Kidney (tissue), 22 donors: ENCODE measurements at regions of chr11 and their contacts with region 1.

Region 1: DNA sequence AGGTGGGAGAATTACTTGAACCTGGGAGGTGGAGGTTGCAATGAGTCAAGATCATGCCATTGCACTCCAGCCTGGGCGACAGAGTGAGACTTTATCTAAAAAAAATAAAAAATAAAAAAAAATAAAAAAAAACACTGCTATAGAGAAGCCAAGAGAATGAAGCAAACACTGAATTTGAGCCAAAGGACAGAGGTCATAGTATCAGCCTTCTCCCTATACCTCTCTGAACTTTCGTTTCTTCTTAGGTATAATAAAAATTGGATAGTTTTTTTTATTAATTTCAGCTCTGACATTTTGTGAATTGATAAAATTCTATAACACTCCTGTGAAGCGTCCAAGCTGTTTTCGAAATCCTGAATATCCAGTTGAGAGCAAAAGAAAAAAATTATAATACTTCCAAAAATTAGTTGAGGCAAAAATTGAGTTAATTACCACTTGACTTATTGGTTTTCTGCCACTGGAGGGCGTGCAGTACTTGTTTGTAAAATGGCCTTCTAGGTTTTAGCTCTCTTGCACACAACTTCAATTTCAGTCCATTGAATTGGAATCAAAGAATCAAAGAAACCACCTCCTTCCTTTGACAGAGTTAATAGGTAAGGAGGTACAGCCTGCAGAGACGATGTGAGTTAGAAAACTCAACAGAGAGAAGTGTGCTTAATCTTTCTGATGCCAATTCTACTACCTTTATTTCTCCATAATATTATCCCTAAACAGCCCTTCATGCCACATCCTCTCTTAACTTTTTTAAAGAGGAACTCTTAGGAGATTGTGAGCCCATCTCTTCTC is 143.2 kb downstream of the BBOX1 start:
- DNase-seq: peak in 3 of 5 donors; percentile 59 to 86 (median 70)
- H3K4me3 ChIP-seq: no peak overlapping the region
- H3K27ac ChIP-seq: no peak overlapping the region
- H3K4me1 ChIP-seq: peaks cover 3 to 15% (median 13%) of the 10 kb centered on the region in 3 donors
- H3K27me3 ChIP-seq: no peaks in the 10 kb centered on the region
- CTCF ChIP-seq: peak; percentile 86

Region 2: DNA sequence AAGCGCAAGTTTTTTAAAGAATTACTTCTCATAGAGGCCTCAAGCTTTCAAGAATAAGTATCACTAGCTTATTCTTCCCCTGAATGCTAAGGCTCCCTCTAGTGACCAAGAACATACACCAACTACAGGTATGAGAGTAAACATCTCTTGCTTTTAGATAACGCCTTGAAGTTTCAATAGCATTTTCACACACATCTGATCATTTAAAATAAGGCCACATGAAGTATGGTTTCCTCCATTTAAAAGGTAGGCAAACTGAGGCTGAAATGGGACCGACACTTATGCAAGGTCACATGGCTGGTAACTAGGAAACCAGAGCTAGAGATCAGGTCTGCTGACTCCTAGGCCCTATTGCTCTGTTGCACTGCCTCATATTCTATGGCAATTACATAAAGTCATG is 112.6 kb after region 1 on chr11:
- intact Hi-C with region 1: loop called (anchors 10 kb)
- DNase-seq: peak in 2 of 5 donors; percentile 69 to 75
- H3K4me3 ChIP-seq: no peak overlapping the region
- H3K27ac ChIP-seq: no peak overlapping the region
- H3K4me1 ChIP-seq: peaks cover 0 to 9% (median 0%) of the 10 kb centered on the region in 3 donors
- H3K27me3 ChIP-seq: no peaks in the 10 kb centered on the region
- CTCF ChIP-seq: peak; percentile 51

Region 3: GRCh38 chr11:27485930-27486773 is 302.3 kb after region 1 on chr11:
- intact Hi-C with region 1: loop called (anchors 5 kb)
- DNase-seq: peak in 2 of 5 donors; percentile 81 to 84
- H3K4me3 ChIP-seq: no peak overlapping the region
- H3K27ac ChIP-seq: no peak overlapping the region
- H3K4me1 ChIP-seq: no peaks in the 10 kb centered on the region
- H3K27me3 ChIP-seq: no peaks in the 10 kb centered on the region
- CTCF ChIP-seq: peak; percentile 94